ENCODE measurements at regions of chr10 and their contacts with region 1.

Region 1: GRCh38 chr10:125124907-125125306 is 35.5 kb downstream of the CTBP2 start:
- DNase-seq: no peak
- H3K4me3 ChIP-seq: no peak overlapping the region
- H3K27ac ChIP-seq: peak overlapping the region; percentile 49 to 82
- H3K4me1 ChIP-seq: peaks cover 18% of the 10 kb centered on the region
- H3K27me3 ChIP-seq: no peaks in the 10 kb centered on the region
- CTCF ChIP-seq: no peak
- POLR2A ChIP-seq: no peak

Region 2: GRCh38 chr10:125084614-125085257 is 40.2 kb before region 1 on chr10:
- intact Hi-C with region 1: loop called (anchors 5 kb)
- DNase-seq: no peak
- H3K4me3 ChIP-seq: no peak overlapping the region
- H3K27ac ChIP-seq: peak overlapping the region; percentile 3 to 9
- H3K4me1 ChIP-seq: peaks cover 7% of the 10 kb centered on the region
- H3K27me3 ChIP-seq: no peaks in the 10 kb centered on the region
- CTCF ChIP-seq: no peak
- POLR2A ChIP-seq: no peak

Measured in prostate gland (tissue), 2 donors.